ENCODE measurements at regions of chr5 and their contacts with region 1.

Region 1: GRCh38 chr5:138035605-138036537 is 3.0 kb upstream of the FAM13B start:
- DNase-seq: peak; percentile 75
- H3K4me3 ChIP-seq: no peak overlapping the region
- H3K27ac ChIP-seq: peak overlapping the region; percentile 12 to 64 (median 54)
- H3K4me1 ChIP-seq: peaks cover 0 to 24% (median 22%) of the 10 kb centered on the region in 4 donors
- H3K27me3 ChIP-seq: no peaks in the 10 kb centered on the region
- CTCF ChIP-seq: peak; percentile 66 to 86 (median 72)
- EP300 ChIP-seq: no peak
- POLR2A ChIP-seq: no peak

Region 2: DNA sequence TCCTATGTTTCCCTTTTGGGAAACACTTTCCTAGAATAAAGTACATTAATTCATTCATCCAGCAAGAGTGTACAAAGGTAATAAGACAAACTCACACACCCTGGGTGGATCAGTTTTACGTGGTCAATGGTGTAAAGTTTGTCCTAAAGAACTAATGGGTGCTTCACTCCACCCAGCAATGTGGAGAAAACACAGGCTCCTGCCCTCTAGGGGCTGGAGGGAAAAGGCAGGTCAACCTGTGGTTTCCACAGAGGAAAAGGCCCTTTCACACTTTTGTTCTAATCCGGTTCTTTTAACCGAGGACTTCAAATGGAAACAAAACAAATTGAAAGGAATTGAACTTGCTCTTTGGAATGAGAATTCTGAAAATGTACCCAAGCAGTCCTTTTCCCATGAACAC is 455.8 kb before region 1 on chr5:
- intact Hi-C with region 1: no loop called
- DNase-seq: no peak
- H3K4me3 ChIP-seq: no peak overlapping the region
- H3K27ac ChIP-seq: no peak overlapping the region
- H3K4me1 ChIP-seq: no peaks in the 10 kb centered on the region
- H3K27me3 ChIP-seq: no peaks in the 10 kb centered on the region
- CTCF ChIP-seq: no peak
- EP300 ChIP-seq: no peak
- POLR2A ChIP-seq: no peak

Region 3: GRCh38 chr5:137754126-137754960 is 281.5 kb before region 1 on chr5 and contains the start of gene HNRNPA0:
- intact Hi-C with region 1: loop called (anchors 2 kb)
- DNase-seq: peak; percentile 98
- H3K4me3 ChIP-seq: peak within 1 kb of the TSS; percentile 68 to 80 (median 70)
- H3K27ac ChIP-seq: peak within 1 kb of the TSS; percentile 94 to 99 (median 97)
- H3K4me1 ChIP-seq: peaks cover 0 to 35% (median 27%) of the 10 kb centered on the region in 4 donors
- H3K27me3 ChIP-seq: no peaks in the 10 kb centered on the region
- CTCF ChIP-seq: no peak
- EP300 ChIP-seq: peak in 2 of 4 donors; percentile 8 to 10
- POLR2A ChIP-seq: peak; percentile 97
- total RNA-seq, gene HNRNPA0: 10.0 to 12.2 (median 10.9) TPM

Region 4: GRCh38 chr5:137833463-137833862 is 202.4 kb before region 1 on chr5:
- intact Hi-C with region 1: no loop called
- DNase-seq: no peak
- H3K4me3 ChIP-seq: no peak overlapping the region
- H3K27ac ChIP-seq: peak overlapping the region in 2 of 4 donors; percentile 42 to 75
- H3K4me1 ChIP-seq: peaks cover 0 to 77% (median 28%) of the 10 kb centered on the region in 4 donors
- H3K27me3 ChIP-seq: no peaks in the 10 kb centered on the region
- CTCF ChIP-seq: no peak
- EP300 ChIP-seq: peak in 2 of 4 donors; percentile 8 to 36
- POLR2A ChIP-seq: no peak

Region 5: GRCh38 chr5:138067945-138068344 is 32.1 kb after region 1 on chr5:
- intact Hi-C with region 1: loop called (anchors 1 kb)
- DNase-seq: no peak
- H3K4me3 ChIP-seq: no peak overlapping the region
- H3K27ac ChIP-seq: no peak overlapping the region
- H3K4me1 ChIP-seq: no peaks in the 10 kb centered on the region
- H3K27me3 ChIP-seq: no peaks in the 10 kb centered on the region
- CTCF ChIP-seq: no peak
- EP300 ChIP-seq: no peak
- POLR2A ChIP-seq: no peak

Region 6: DNA sequence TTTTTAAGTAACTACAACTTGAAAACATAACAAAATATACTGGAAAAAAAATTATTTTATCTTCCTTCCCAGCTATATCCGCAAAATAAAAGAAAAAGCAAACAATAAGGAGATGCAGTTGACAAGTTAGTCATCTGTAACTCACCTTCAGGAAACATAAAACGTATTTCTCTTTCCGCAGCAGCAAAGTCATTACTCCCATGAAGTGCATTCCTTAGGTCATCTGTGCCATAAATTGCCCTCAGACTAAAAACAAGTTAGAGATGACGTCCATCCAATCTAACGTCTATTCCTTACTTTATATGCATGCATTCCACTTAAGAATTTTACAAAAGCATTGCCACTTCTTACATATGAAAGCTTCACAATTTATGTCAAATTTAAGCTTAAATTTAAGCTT is 92.5 kb after region 1 on chr5:
- intact Hi-C with region 1: loop called (anchors 2 kb)
- DNase-seq: no peak
- H3K4me3 ChIP-seq: no peak overlapping the region
- H3K27ac ChIP-seq: no peak overlapping the region
- H3K4me1 ChIP-seq: no peaks in the 10 kb centered on the region
- H3K27me3 ChIP-seq: no peaks in the 10 kb centered on the region
- CTCF ChIP-seq: no peak
- EP300 ChIP-seq: no peak
- POLR2A ChIP-seq: no peak

Region 7: GRCh38 chr5:138178516-138179276 is 142.8 kb after region 1 on chr5 and contains the starts of genes BRD8 and KIF20A:
- intact Hi-C with region 1: loop called (anchors 5 kb)
- DNase-seq: peak; percentile 98
- H3K4me3 ChIP-seq: peak within 1 kb of the TSS; percentile 70 to 79 (median 76)
- H3K27ac ChIP-seq: peak within 1 kb of the TSS; percentile 74 to 93 (median 87)
- H3K4me1 ChIP-seq: peaks cover 0 to 27% (median 20%) of the 10 kb centered on the region in 4 donors
- H3K27me3 ChIP-seq: no peaks in the 10 kb centered on the region
- CTCF ChIP-seq: no peak
- EP300 ChIP-seq: peak in 2 of 4 donors; percentile 5 to 64
- POLR2A ChIP-seq: peak in 1 of 2 donors; percentile 23
- total RNA-seq, gene BRD8: 48.5 to 52.3 (median 50.5) TPM
- total RNA-seq, gene KIF20A: 0.36 to 0.55 (median 0.54) TPM in 3 of 4 donors, not detected in the other

Region 8: GRCh38 chr5:138337685-138338410 is 302.0 kb after region 1 on chr5 and contains the start of gene FAM53C:
- intact Hi-C with region 1: loop called (anchors 5 kb)
- DNase-seq: peak; percentile 96
- H3K4me3 ChIP-seq: peak within 1 kb of the TSS; percentile 78 to 96 (median 88)
- H3K27ac ChIP-seq: peak within 1 kb of the TSS; percentile 93 to 96 (median 95)
- H3K4me1 ChIP-seq: peaks cover 0 to 33% (median 26%) of the 10 kb centered on the region in 4 donors
- H3K27me3 ChIP-seq: no peaks in the 10 kb centered on the region
- CTCF ChIP-seq: no peak
- EP300 ChIP-seq: peak in 1 of 4 donors; percentile 3
- POLR2A ChIP-seq: peak; percentile 89 to 94
- total RNA-seq, gene FAM53C: 26.8 to 28.5 (median 27.7) TPM